ENCODE measurements at regions of chr16 and their contacts with region 1.

Region 1: DNA sequence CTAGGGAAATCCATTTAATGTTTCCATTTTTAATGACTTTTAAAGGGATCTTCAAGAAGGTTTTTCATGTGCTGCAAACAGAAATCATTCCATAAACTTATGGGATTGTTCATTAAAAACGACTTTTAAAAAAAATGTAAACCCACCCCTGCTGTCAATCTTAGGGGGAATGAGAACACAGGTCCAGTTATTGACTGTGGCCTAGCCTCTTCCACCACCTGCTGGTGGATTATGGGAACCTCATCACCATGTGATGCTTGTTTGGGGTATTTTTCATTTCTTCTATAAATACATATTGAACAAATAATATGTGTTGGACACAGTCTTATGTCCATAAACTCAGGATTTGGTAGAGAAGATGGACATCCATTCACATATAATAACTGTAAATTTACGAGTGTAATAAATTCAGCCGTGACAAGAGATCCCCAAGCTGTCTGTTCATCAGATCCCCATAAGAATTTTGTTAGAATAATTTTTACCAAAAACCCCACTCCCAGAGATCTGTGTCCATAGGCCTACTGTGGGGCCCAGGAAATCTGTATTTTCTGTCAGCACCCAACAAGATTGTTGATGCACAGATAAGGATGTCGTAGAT is 42.0 kb upstream of the TMC5 start:
- DNase-seq: no peak
- ATAC-seq: peak; percentile 77
- H3K4me3 ChIP-seq: no peak overlapping the region
- H3K27ac ChIP-seq: no peak overlapping the region
- H3K4me1 ChIP-seq: no peaks in the 10 kb centered on the region
- H3K27me3 ChIP-seq: no peaks in the 10 kb centered on the region

Region 2: GRCh38 chr16:19167710-19168370 is 207.8 kb before region 1 on chr16 and contains the start of gene SYT17:
- intact Hi-C with region 1: loop called (anchors 2 to 10 kb)
- DNase-seq: peak; percentile 81 to 89
- ATAC-seq: peak; percentile 85
- H3K4me3 ChIP-seq: peak within 1 kb of the TSS; percentile 44 to 52
- H3K27ac ChIP-seq: no peak within 1 kb of the TSS
- H3K4me1 ChIP-seq: no peaks in the 10 kb centered on the region
- H3K27me3 ChIP-seq: no peaks in the 10 kb centered on the region
- total RNA-seq, gene SYT17: 2.5 to 4.3 TPM

Measured in aorta (tissue), 5 donors.